Caco-2 (cell line): ENCODE measurements at regions of chr14 and their contacts with region 1.

Region 1: GRCh38 chr14:24146978-24147760 is at the start of gene RNF31:
- DNase-seq: peak; percentile 97 to 98
- H3K4me3 ChIP-seq: peak within 1 kb of the TSS; percentile 95
- H3K4me3 Mint-ChIP-seq: peak within 1 kb of the TSS; percentile 92
- H3K27ac Mint-ChIP-seq: peak within 1 kb of the TSS; percentile 65
- H3K4me1 ChIP-seq: peaks cover 6% of the 10 kb centered on the region
- H3K4me1 Mint-ChIP-seq: peaks cover 14% of the 10 kb centered on the region
- H3K27me3 ChIP-seq: no peaks in the 10 kb centered on the region
- H3K27me3 Mint-ChIP-seq: no peaks in the 10 kb centered on the region
- CTCF ChIP-seq: peak in 1 of 2 experiments; percentile 15
- total RNA-seq, gene RNF31: 72.2 and 77.6 TPM in 2 replicates

Region 2: DNA sequence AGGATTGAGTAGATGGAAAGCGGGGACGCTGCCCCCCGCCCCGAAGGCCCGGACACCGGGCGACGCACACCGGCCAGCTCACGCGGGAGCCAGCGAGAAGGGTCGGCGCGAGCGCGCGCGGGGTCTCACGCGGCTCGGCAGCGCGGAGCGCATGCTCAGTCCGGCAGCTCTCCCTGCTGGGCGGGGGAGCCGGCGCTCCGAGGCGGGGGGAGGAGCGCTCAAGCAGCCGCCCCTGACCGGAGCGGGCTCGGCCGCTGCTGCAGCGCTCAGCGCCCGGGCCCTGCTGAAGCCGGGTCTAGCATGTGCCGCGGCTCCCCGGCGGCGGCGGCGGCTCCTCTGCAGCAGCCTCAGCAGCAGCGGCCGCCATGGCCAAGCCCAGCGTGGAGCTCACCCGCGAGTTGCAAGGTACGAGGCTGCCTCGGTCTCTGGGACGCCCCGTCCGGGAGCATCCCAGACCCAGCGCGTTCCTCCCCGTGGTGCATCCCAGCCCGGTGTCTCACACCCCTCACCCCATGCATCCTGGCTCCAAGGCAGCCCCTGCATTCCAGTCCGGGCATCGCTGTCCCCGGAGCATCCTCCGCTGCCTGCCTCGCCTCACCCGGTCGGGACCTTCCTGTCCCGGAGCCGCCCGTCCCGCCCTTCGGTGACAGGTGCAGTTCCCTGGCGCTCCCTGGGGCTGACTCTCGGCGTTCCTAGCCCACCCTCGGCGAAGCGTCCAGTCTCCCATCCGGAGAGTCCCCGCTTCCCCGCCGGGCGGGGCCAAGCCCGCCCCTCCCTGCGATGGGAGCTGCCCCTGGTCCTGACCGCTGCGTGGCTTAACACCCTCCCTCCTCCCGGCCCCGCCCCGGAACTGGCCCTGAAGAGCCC is 95.1 kb before region 1 on chr14 and contains the start of gene CARMIL3:
- CTCF ChIA-PET with region 1: no interaction called
- POLR2A ChIA-PET with region 1: no interaction called
- intact Hi-C with region 1: no loop called
- DNase-seq: peak; percentile 59 to 73
- H3K4me3 ChIP-seq: peak within 1 kb of the TSS; percentile 65
- H3K4me3 Mint-ChIP-seq: peak within 1 kb of the TSS; percentile 74
- H3K27ac Mint-ChIP-seq: no peak within 1 kb of the TSS
- H3K4me1 ChIP-seq: peaks cover 5% of the 10 kb centered on the region; the same call in 1 of the 2 replicates
- H3K4me1 Mint-ChIP-seq: no peaks in the 10 kb centered on the region
- H3K27me3 ChIP-seq: no peaks in the 10 kb centered on the region
- H3K27me3 Mint-ChIP-seq: peaks cover 11% of the 10 kb centered on the region
- CTCF ChIP-seq: no peak
- total RNA-seq, gene CARMIL3: 0.88 and 1.00 TPM in 2 replicates

Region 3: GRCh38 chr14:24108336-24108874 is 38.8 kb before region 1 on chr14:
- CTCF ChIA-PET with region 1: interaction called, 17 read pairs
- POLR2A ChIA-PET with region 1: interaction called, 46 read pairs
- intact Hi-C with region 1: no loop called
- DNase-seq: no peak
- H3K4me3 ChIP-seq: no peak overlapping the region
- H3K4me3 Mint-ChIP-seq: no peak overlapping the region
- H3K27ac Mint-ChIP-seq: no peak overlapping the region
- H3K4me1 ChIP-seq: peaks cover 8% of the 10 kb centered on the region; the same call in 1 of the 2 replicates
- H3K4me1 Mint-ChIP-seq: no peaks in the 10 kb centered on the region
- H3K27me3 ChIP-seq: no peaks in the 10 kb centered on the region
- H3K27me3 Mint-ChIP-seq: no peaks in the 10 kb centered on the region
- CTCF ChIP-seq: no peak

Region 4: GRCh38 chr14:24135834-24136542 is 11.2 kb before region 1 on chr14 and contains the start of gene PSME1:
- CTCF ChIA-PET with region 1: interaction called, 8 read pairs
- POLR2A ChIA-PET with region 1: interaction called, 21 read pairs
- intact Hi-C with region 1: loop called (anchors 1 kb)
- DNase-seq: peak; percentile 94 to 95
- H3K4me3 ChIP-seq: peak within 1 kb of the TSS; percentile 90
- H3K4me3 Mint-ChIP-seq: peak within 1 kb of the TSS; percentile 77
- H3K27ac Mint-ChIP-seq: peak within 1 kb of the TSS; percentile 57
- H3K4me1 ChIP-seq: no peaks in the 10 kb centered on the region; the same call in 1 of the 2 replicates
- H3K4me1 Mint-ChIP-seq: peaks cover 32% of the 10 kb centered on the region
- H3K27me3 ChIP-seq: no peaks in the 10 kb centered on the region
- H3K27me3 Mint-ChIP-seq: no peaks in the 10 kb centered on the region
- CTCF ChIP-seq: no peak
- total RNA-seq, gene PSME1: 130 and 141 TPM in 2 replicates

Region 5: DNA sequence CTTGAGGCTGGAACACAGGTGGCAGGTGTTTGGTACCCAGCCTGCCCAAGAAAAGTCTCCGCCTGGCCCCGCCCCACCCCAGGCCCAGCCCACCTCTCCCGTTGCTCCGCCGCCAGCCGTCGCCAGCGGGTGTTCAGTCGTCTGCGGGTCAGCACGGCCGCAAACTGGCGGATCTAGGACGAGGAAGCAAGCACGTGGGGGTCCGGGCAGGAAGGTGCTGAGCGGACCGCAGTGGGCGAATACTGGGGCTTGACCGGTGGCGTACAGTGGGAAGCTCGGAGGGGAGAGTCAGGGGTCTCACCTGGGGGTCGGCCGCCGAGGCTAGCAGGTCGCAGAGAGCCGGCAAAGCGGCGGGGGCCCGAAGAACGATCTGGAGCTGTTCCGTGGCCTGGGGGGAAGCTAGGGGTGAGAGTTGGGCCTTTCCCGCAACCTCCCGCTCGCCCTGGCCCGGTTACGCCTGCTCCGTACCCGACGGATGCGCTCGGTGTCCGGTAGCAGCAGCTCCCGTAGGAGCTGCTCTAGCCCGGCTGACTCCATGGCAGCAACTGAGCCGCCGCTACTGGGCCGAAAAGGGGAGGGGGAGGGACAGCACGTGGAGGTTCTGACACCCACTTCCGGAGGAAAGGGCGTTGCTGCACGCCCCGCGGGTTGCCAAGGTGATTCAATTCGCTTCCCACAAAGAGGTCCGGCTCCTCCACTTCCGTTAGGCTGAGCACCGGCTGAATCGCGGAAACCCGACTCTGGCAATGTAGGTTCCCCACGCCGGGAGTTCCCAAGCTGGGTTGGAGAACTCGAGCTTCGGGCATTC is 41.3 kb after region 1 on chr14 and contains the start of gene IPO4:
- CTCF ChIA-PET with region 1: no interaction called
- POLR2A ChIA-PET with region 1: interaction called, 4 read pairs
- intact Hi-C with region 1: loop called (anchors 1 kb)
- DNase-seq: peak; percentile 96 to 98
- H3K4me3 ChIP-seq: peak within 1 kb of the TSS; percentile 63
- H3K4me3 Mint-ChIP-seq: peak within 1 kb of the TSS; percentile 92
- H3K27ac Mint-ChIP-seq: peak within 1 kb of the TSS; percentile 94
- H3K4me1 ChIP-seq: no peaks in the 10 kb centered on the region
- H3K4me1 Mint-ChIP-seq: peaks cover 14% of the 10 kb centered on the region
- H3K27me3 ChIP-seq: no peaks in the 10 kb centered on the region
- H3K27me3 Mint-ChIP-seq: no peaks in the 10 kb centered on the region
- CTCF ChIP-seq: no peak
- total RNA-seq, gene IPO4: 85.4 and 95.8 TPM in 2 replicates

Region 6: GRCh38 chr14:24241829-24242443 is 94.8 kb after region 1 on chr14:
- CTCF ChIA-PET with region 1: interaction called, 6 read pairs
- POLR2A ChIA-PET with region 1: interaction called, 14 read pairs
- intact Hi-C with region 1: no loop called
- DNase-seq: peak; percentile 95
- H3K4me3 ChIP-seq: peak overlapping the region; percentile 71
- H3K4me3 Mint-ChIP-seq: peak overlapping the region; percentile 74
- H3K27ac Mint-ChIP-seq: peak overlapping the region; percentile 91
- H3K4me1 ChIP-seq: no peaks in the 10 kb centered on the region
- H3K4me1 Mint-ChIP-seq: peaks cover 9% of the 10 kb centered on the region
- H3K27me3 ChIP-seq: no peaks in the 10 kb centered on the region
- H3K27me3 Mint-ChIP-seq: no peaks in the 10 kb centered on the region
- CTCF ChIP-seq: peak; percentile 49 to 58